Mucosa of descending colon (tissue), 3 donors: ENCODE measurements at regions of chr14 and their contacts with region 1.

Region 1: DNA sequence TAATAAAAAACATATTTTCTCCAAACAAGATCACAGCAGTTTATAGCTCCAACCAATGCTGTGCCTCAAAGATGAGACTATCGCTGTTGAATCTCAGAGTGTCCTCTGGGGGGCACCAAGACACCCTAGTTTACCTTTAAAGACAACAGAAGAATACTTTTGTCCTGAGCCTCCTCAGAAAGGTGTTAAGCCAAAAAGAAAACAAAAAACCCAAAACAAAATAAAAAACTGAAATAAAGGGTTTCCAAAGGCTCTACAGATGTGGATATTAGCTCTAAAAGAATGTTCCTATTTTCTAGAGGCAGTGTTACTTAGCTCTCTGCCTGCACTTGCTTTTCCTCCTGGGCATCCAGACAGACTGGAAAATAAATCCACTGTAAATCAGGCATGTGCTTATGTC is 86.9 kb upstream of the TTC7B start:
- DNase-seq: peak in 1 of 3 donors; percentile 75
- ATAC-seq: peak; percentile 86
- H3K4me3 ChIP-seq: no peak overlapping the region
- H3K4me1 ChIP-seq: no peaks in the 10 kb centered on the region
- CTCF ChIP-seq: peak; percentile 39

Region 2: DNA sequence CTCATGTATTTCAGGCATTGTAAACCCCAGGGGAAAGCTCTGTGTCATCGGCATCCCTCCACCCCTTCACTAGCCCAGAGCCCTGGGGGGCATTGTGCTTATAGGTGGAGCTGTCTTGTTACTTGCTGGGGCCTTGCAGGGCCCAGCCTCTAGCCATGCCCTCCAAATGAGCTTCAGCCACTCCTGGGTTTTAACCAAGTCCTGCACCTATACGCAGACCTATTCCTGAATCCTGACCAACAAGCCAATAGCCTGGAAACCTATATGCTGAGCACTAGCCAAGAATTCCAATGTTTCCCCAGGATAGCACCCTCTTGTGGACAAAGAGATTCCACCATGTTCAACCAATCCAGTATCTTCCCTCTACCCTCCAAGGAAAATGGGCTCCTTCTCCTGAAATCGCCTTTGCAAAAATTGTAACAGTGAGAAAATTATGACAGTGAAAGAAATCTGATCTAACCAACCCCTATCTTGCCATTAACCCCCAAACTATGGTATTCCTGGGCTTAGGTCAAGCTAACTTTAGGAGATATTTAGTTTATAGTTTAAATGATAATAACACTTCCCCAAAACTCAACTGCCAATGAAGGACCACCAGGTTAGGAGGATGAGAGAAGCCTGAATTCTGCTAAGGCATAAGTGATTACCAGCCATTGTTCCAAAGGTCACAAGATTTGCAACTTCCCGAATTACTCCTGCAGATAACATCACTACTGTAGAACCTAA is 142.3 kb before region 1 on chr14:
- intact Hi-C with region 1: no loop called
- DNase-seq: peak in 1 of 3 donors; percentile 32
- ATAC-seq: peak; percentile 32
- H3K4me3 ChIP-seq: no peak overlapping the region
- H3K4me1 ChIP-seq: peaks cover 6% of the 10 kb centered on the region
- CTCF ChIP-seq: peak; percentile 55

Region 3: DNA sequence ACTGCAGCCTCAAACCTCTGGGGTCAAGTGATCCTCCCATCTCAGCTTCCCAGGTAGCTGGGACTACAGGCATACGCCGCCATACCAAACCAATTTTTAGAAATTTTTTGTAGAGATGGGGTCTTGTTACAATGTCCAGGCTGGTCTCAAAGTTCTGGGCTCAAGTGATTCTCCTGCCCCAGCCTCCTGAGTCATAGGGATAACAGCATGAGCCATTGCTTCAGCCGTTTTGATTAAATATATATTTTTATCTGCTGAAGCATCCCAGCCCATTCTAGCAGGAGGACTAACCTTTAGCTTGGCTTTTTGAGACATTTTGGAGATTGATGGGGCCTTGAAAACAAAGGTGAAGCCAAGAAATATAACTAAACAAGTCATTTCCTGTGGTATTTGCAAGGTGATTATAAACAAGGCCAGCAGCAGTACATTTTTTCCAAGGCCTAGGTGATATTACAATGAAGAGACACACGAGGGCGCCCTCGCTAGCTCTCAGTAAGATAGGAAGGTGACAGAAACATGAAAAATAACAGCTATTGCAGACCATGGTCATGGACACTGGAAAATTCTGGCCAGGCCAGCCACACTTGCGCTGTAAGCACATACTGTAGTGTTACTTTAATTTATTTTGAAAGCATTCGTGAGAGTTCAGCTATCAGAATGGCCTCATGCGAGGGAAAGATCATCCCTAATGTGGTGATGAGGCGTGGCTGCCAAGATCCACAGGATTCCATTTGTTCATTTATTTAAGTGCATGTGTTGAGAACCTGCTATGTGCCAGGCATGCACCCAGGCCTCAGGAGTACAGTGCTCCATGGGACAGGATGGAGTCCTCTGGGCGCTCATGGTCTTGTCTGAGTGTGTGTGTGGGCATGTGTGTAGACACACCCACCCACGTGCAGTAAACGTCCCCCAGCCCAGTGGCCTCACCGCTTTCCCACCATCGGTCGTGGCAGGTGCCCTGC is 274.3 kb after region 1 on chr14:
- intact Hi-C with region 1: loop called (anchors 5 kb)
- DNase-seq: peak in 1 of 3 donors; percentile 66
- ATAC-seq: peak; percentile 85
- H3K4me3 ChIP-seq: no peak overlapping the region
- H3K4me1 ChIP-seq: no peaks in the 10 kb centered on the region
- CTCF ChIP-seq: peak; percentile 52

Region 4: GRCh38 chr14:91286530-91286937 is 383.4 kb after region 1 on chr14:
- intact Hi-C with region 1: loop called in 1 of 2 experiments (anchors 10 kb)
- DNase-seq: peak in 2 of 3 donors; percentile 83 to 89
- ATAC-seq: peak; percentile 89
- H3K4me3 ChIP-seq: no peak overlapping the region
- H3K4me1 ChIP-seq: no peaks in the 10 kb centered on the region
- CTCF ChIP-seq: peak; percentile 75